ENCODE measurements at regions of chr1 and their contacts with region 1.

Region 1: DNA sequence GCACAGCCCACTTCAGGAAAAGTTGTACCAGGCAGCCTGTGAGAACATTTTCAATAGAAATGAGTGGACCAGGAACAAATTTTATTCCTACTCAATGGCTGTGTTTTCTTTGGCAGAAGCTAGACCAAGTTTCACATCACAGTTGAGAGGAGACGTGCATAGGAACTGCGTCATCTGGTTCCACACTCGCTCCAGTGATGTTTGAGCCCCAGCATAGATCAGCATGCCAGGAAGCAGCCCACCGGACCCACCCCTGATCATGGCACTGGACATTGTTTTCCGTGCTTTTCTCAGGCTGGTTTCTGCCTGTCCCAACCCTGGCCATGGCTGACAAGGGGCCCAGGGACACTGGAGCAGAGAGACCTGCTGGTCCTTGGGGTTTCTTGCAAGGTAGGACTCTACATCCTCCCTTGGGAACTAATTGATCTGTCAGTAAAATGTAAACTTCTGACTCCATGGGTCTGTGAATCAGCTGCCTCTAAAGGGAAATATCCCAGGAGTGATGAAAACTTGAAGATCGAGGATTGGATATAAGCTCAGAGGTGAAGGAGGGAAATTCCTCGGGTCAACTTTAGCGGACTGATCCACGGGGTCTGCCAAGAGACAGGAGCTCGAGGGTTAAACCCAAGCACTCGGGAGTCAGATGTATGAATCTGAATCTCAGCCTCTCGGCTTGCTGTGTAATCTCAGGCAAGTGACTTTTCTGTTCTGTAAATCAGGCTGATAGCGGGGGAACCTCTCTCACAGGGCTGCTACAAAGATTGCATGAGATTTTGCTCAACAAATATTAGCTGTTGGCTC is 35.7 kb downstream of the NEK2 start:
- DNase-seq: peak; percentile 69
- H3K4me3 ChIP-seq: no peak overlapping the region
- H3K27me3 ChIP-seq: no peaks in the 10 kb centered on the region
- CTCF ChIP-seq: no peak

Region 2: DNA sequence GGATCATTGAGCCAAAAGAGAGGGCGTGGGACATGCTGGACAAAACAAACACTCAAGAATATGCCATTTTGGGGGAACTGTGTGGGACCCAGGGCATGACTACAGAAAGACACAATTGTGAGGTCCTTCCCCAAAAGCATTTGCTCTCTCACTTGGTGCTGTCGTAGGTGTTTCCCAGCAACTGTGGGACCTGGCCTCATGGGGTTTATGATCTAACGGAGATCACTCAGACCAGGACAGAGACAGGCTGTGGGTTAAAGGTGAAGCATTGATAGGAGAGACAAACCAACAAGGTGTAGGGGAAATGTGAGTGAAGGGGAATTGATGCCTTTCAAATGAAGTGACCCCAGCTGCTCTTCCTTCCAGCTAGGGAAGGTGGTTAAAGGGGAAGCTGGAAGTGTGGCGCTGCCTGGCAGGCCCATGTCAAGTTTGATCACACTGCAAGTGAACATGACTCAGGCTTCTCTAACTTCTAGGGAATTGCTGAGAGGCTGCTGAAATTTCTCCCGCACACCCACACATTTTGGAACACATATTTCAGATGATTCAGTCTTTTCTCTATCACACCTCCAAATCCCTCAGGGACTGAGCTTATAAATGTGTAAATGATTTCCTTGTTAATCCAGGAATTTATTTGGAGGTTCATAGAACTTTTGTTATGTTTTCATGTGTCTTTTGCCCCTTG is 282.8 kb before region 1 on chr1:
- CTCF ChIA-PET with region 1: no interaction called
- POLR2A ChIA-PET with region 1: no interaction called
- DNase-seq: no peak
- H3K4me3 ChIP-seq: no peak overlapping the region
- H3K27me3 ChIP-seq: no peaks in the 10 kb centered on the region
- CTCF ChIP-seq: no peak

Region 3: GRCh38 chr1:211578640-211579433 is 60.9 kb before region 1 on chr1 and contains the start of gene SLC30A1:
- CTCF ChIA-PET with region 1: interaction called, 11 read pairs
- POLR2A ChIA-PET with region 1: no interaction called
- DNase-seq: peak; percentile 84
- H3K4me3 ChIP-seq: peak within 1 kb of the TSS; percentile 78
- H3K27me3 ChIP-seq: no peaks in the 10 kb centered on the region
- CTCF ChIP-seq: no peak
- polyA plus RNA-seq, gene SLC30A1: 5.8 and 9.9 TPM in 2 replicates

Region 4: DNA sequence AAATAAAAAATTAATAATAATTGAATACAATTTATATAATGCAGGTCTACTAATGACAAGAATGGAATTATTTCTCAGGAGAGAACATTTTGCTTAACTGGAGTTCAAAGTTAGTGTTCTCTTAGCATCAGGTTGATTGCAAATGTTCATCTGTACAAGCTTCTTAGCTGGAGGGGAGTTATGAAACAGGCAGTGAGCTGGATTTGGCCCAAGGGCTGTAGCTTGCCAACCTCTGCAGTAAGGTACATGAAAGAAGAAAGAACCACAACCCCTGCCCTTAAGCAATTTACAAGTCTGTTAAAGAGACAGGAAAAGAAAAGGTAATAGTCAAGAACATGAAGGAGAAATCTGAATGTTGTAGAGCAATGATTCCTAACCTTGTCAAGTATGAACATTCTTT is 173.9 kb after region 1 on chr1:
- CTCF ChIA-PET with region 1: no interaction called
- POLR2A ChIA-PET with region 1: no interaction called
- DNase-seq: no peak
- H3K4me3 ChIP-seq: no peak overlapping the region
- H3K27me3 ChIP-seq: no peaks in the 10 kb centered on the region
- CTCF ChIP-seq: no peak

Measured in BJ (cell line).